CD4-positive, alpha-beta T cell (primary cell): ENCODE measurements at regions of chr17 and their contacts with region 1.

Region 1: GRCh38 chr17:7825206-7825990 is 8.6 kb upstream of the KDM6B start:
- DNase-seq: peak in 1 of 14 experiments; percentile 39
- ATAC-seq: peak; percentile 31
- H3K4me3 ChIP-seq: no peak overlapping the region
- H3K4me3 Mint-ChIP-seq: no peak overlapping the region
- H3K27ac ChIP-seq: no peak overlapping the region
- H3K27ac Mint-ChIP-seq: no peak overlapping the region
- H3K4me1 ChIP-seq: no peaks in the 10 kb centered on the region
- H3K4me1 Mint-ChIP-seq: no peaks in the 10 kb centered on the region
- H3K27me3 ChIP-seq: no peaks in the 10 kb centered on the region
- H3K27me3 Mint-ChIP-seq: no peaks in the 10 kb centered on the region
- CTCF ChIP-seq: no peak

Region 2: DNA sequence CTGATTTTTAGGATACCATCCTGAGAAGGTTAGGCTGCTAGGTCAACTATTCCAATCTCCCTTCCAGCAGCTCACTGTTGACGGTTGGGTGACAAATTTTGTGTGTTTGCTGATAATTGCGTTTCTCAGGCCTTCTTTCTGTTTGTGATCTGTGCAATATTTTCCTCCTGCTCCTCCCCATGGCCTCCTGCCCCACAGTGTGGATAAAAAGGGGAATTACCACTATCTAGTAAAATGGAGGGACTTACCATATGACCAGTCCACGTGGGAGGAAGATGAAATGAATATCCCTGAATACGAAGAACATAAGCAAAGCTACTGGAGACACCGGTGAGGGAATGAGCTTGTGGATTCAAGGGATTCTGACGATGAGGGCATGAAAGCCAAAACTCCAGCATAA is 72.4 kb after region 1 on chr17:
- CTCF ChIA-PET with region 1: interaction called, 3 read pairs
- POLR2A ChIA-PET with region 1: no interaction called
- intact Hi-C with region 1: loop called in 1 of 2 experiments (anchors 5 kb)
- DNase-seq: peak in 3 of 14 experiments; percentile 46 to 68 (median 59)
- ATAC-seq: peak; percentile 82
- H3K4me3 ChIP-seq: no peak overlapping the region
- H3K4me3 Mint-ChIP-seq: no peak overlapping the region
- H3K27ac ChIP-seq: no peak overlapping the region
- H3K27ac Mint-ChIP-seq: peak overlapping the region; percentile 7
- H3K4me1 ChIP-seq: peaks cover 3% of the 10 kb centered on the region
- H3K4me1 Mint-ChIP-seq: peaks cover 12% of the 10 kb centered on the region
- H3K27me3 ChIP-seq: no peaks in the 10 kb centered on the region
- H3K27me3 Mint-ChIP-seq: no peaks in the 10 kb centered on the region
- CTCF ChIP-seq: peak; percentile 11